GM12878 (cell line): ENCODE measurements at regions of chr14 and their contacts with region 1.

Region 1: GRCh38 chr14:68210729-68211299 is 391.2 kb downstream of the RAD51B start:
- DNase-seq: peak; percentile 100
- ATAC-seq: peak; percentile 93
- H3K4me3 ChIP-seq: peak overlapping the region; percentile 22; the same call in 1 of the 2 replicates
- H3K27ac ChIP-seq: peak overlapping the region; percentile 86
- H3K4me1 ChIP-seq: peaks cover 58% of the 10 kb centered on the region
- H3K27me3 ChIP-seq: no peaks in the 10 kb centered on the region
- CTCF ChIP-seq: no peak
- EP300 ChIP-seq: peak; percentile 68 to 81
- POLR2A ChIP-seq: no peak
- RAD21 ChIP-seq: 0 out of 2 replicates have a peak, but pooled peaks have one; percentile 17

Region 2: DNA sequence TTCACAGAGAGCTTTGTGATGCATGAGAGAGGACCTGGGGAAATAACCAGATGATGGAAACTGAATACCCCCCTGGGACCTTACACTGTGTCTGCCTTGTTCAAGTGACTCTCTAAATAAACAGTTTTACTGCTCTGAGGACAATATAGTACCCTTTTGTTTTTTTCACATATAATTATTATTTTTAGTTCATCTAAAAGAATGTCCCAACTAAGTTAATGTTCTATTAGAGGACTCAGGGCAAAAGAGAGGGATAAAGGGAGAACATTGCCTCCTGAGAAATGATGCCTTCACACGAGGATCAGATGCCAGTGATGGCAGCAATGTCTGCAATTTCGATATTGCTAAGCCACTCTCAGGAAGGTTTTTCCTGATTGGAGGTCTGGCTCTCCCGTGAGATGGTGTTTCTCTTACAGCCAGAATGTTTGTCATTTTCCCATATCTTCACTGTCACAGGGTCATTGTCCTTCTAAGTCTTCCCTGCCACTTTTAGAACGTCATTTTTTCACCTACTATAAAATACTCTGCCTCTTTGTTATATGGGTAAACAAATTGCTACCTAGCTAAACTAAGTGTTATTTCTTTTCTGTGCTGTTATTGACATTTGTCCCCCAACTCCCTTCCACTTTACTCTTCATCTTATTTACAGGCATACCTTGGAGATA is 189.7 kb before region 1 on chr14:
- CTCF ChIA-PET with region 1: no interaction called
- POLR2A ChIA-PET with region 1: interaction called, 3 read pairs
- RAD21 ChIA-PET with region 1: interaction called, 11 read pairs
- SMC1A ChIA-PET with region 1: interaction called, 9 read pairs
- in situ Hi-C with region 1: no loop called
- intact Hi-C with region 1: loop called (anchors 5 kb)
- DNase-seq: peak; percentile 71
- ATAC-seq: peak; percentile 97
- H3K4me3 ChIP-seq: no peak overlapping the region
- H3K27ac ChIP-seq: peak overlapping the region; percentile 61
- H3K4me1 ChIP-seq: no peaks in the 10 kb centered on the region
- H3K27me3 ChIP-seq: no peaks in the 10 kb centered on the region
- CTCF ChIP-seq: no peak
- EP300 ChIP-seq: no peak; a peak in 1 of 4 replicates
- POLR2A ChIP-seq: no peak
- RAD21 ChIP-seq: no peak

Region 3: DNA sequence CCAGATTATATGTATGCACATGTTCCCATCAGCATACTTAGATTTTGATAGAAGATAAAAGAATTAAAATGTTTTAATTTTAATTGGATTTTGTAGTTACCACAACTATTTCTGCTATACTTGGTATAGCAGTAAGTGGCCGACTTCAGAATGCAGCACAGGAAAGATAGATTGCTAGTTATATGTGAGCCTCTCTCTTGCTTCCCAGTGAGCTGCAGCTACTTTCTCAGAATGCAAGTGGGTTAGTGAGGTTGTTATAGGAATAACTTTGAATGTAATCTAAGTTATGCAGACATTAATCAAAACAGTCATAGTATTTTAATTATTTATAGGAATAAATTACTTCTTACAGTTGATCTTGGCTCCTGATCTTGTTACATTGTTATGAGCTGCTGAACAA is 150.6 kb before region 1 on chr14:
- CTCF ChIA-PET with region 1: no interaction called
- POLR2A ChIA-PET with region 1: no interaction called
- RAD21 ChIA-PET with region 1: no interaction called
- SMC1A ChIA-PET with region 1: no interaction called
- in situ Hi-C with region 1: no loop called
- intact Hi-C with region 1: no loop called
- DNase-seq: no peak
- ATAC-seq: no peak
- H3K4me3 ChIP-seq: no peak overlapping the region
- H3K27ac ChIP-seq: no peak overlapping the region
- H3K4me1 ChIP-seq: no peaks in the 10 kb centered on the region
- H3K27me3 ChIP-seq: no peaks in the 10 kb centered on the region
- CTCF ChIP-seq: no peak
- EP300 ChIP-seq: no peak
- POLR2A ChIP-seq: no peak
- RAD21 ChIP-seq: no peak

Region 4: DNA sequence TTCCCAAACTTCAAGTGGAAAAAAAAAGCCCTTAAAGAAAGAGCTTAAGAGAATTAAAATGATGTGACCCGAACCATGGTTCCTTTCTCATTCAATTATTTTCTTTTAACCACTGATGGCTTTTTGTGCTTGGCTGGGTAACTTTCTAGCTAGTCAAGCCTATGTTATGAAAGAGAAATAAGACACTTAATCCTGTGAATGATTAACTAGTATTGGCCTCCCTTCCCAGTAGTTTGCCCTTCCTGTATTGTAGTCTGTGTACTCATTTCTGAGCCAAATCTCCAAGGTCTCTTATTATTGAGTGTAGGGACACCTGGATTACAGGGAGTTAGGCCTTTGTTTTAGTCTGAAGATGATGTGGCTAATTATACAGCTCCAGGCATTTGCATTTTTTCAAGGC is 38.2 kb before region 1 on chr14:
- CTCF ChIA-PET with region 1: interaction called, 4 read pairs
- POLR2A ChIA-PET with region 1: no interaction called
- RAD21 ChIA-PET with region 1: interaction called, 7 read pairs
- SMC1A ChIA-PET with region 1: interaction called, 17 read pairs
- in situ Hi-C with region 1: no loop called
- intact Hi-C with region 1: no loop called
- DNase-seq: peak; percentile 43
- ATAC-seq: peak; percentile 94
- H3K4me3 ChIP-seq: no peak overlapping the region
- H3K27ac ChIP-seq: no peak overlapping the region
- H3K4me1 ChIP-seq: no peaks in the 10 kb centered on the region
- H3K27me3 ChIP-seq: no peaks in the 10 kb centered on the region
- CTCF ChIP-seq: no peak
- EP300 ChIP-seq: no peak
- POLR2A ChIP-seq: no peak
- RAD21 ChIP-seq: no peak

Region 5: GRCh38 chr14:68223631-68224030 is 12.8 kb after region 1 on chr14:
- CTCF ChIA-PET with region 1: interaction called, 4 read pairs
- POLR2A ChIA-PET with region 1: interaction called, 3 read pairs
- RAD21 ChIA-PET with region 1: interaction called, 4 read pairs
- SMC1A ChIA-PET with region 1: interaction called, 16 read pairs
- in situ Hi-C with region 1: no loop called
- intact Hi-C with region 1: no loop called
- DNase-seq: no peak
- ATAC-seq: no peak
- H3K4me3 ChIP-seq: no peak overlapping the region
- H3K27ac ChIP-seq: no peak overlapping the region
- H3K4me1 ChIP-seq: no peaks in the 10 kb centered on the region
- H3K27me3 ChIP-seq: no peaks in the 10 kb centered on the region
- CTCF ChIP-seq: no peak
- EP300 ChIP-seq: no peak
- POLR2A ChIP-seq: no peak
- RAD21 ChIP-seq: no peak

Region 6: GRCh38 chr14:68268197-68268596 is 57.4 kb after region 1 on chr14:
- CTCF ChIA-PET with region 1: no interaction called
- POLR2A ChIA-PET with region 1: interaction called, 3 read pairs
- RAD21 ChIA-PET with region 1: interaction called, 4 read pairs
- SMC1A ChIA-PET with region 1: interaction called, 6 read pairs
- in situ Hi-C with region 1: no loop called
- intact Hi-C with region 1: loop called (anchors 2 kb)
- DNase-seq: peak; percentile 93
- ATAC-seq: peak; percentile 84
- H3K4me3 ChIP-seq: no peak overlapping the region
- H3K27ac ChIP-seq: peak overlapping the region; percentile 84
- H3K4me1 ChIP-seq: peaks cover 73% of the 10 kb centered on the region
- H3K27me3 ChIP-seq: no peaks in the 10 kb centered on the region
- CTCF ChIP-seq: no peak
- EP300 ChIP-seq: peak; percentile 93 to 100; a peak in 3 of 4 replicates
- POLR2A ChIP-seq: no peak
- RAD21 ChIP-seq: peak; percentile 22